ENCODE measurements at regions of chr10 and their contacts with region 1.

Region 1: DNA sequence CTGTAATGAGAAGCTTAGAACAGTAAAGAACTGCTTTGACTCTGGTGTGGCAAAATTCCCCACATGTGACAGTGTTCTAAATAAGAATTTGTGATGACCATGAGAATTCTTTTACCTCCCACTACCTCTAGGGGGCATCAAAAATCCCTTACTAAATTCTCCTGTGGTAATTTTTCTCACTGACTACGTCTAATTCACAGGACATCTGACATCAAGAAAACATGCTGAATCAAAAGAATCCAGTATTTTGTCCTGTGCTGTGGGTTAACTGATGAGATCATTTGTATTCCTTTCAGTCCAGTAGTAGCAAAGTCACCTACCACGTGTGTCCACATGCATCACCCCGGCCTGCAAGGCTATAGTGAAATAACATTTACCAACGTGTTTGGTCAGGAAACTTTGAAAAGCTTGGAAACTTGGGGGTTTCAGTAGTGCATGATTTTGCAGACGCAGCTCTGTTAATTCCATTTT is 103.8 kb downstream of the ATE1 start:
- H3K4me3 ChIP-seq: no peak overlapping the region
- H3K27ac ChIP-seq: no peak overlapping the region
- H3K4me1 ChIP-seq: peaks cover 15% of the 10 kb centered on the region; the same call in 1 of the 2 replicates
- CTCF ChIP-seq: no peak; the same call in 1 of the 2 replicates

Region 2: DNA sequence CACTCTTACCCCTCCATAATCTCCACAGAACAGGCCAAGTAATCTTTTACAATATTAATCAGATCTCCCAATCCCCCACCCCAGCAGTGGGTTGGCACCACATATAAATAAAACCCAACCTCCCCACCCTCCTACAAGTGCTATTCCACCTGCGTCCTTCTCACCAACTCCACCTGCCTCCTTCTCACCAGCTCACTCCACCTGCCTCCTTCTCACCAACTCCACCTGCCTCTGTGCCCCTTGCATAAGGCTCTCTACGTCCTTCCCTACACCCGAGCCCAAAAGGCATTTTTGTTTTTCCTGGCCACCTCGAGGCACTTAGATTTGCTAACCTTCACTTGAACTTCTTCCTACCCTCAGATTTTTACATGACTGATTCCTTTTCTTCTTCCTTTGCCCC is 14.1 kb after region 1 on chr10:
- CTCF ChIA-PET with region 1: interaction called, 22 read pairs
- POLR2A ChIA-PET with region 1: no interaction called
- H3K4me3 ChIP-seq: no peak overlapping the region
- H3K27ac ChIP-seq: no peak overlapping the region
- H3K4me1 ChIP-seq: peaks cover 17% of the 10 kb centered on the region
- CTCF ChIP-seq: no peak

Region 3: DNA sequence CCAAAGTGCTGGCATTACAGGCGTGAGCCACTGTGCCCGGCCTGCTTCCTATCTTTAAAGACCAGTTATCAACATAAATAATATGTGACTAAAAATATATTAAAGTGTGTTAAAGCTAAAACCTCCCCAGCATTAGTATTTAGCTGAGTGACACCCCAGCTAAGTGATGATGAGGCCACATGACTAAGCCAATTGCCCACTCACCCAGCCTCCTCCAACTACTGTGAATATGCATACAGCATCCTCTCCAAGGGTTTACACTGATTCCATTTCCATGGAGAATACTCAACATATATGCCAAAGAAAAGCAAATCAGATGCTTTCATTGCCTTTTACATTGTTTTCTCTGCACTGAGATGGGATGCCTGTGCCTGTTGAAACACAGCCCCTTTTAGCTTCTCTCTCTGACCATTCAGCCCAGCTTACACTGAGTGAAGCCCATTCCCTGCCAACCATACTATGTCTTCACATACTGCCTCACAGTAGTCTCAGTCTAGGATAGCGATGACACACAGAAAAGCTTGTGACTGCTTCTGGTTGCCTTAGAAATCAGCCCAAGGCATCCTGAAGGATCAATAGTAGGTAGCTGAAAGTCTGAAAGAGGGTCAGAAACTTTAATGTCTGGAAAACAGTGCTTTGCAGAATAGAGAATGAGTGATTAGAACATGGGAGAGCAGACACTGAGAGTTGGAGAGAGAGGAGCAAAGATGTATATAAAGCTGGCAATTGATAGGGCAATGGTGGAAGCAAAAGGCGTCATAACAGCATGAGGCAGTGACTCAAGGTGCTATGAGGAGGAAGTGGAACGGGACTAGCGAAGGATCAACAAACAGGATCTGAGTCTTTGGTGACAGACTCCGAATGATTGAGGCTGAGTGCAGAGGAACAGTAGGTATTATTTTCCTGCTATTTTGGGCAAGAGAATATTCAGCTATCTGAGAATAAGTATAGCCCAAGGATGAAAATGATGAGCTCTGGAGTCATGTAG is 123.6 kb after region 1 on chr10:
- CTCF ChIA-PET with region 1: no interaction called
- POLR2A ChIA-PET with region 1: no interaction called
- H3K4me3 ChIP-seq: no peak overlapping the region
- H3K27ac ChIP-seq: no peak overlapping the region
- H3K4me1 ChIP-seq: no peaks in the 10 kb centered on the region
- CTCF ChIP-seq: no peak

Measured in HEK293 (cell line).